Activated B cell treated with CpG ODN at 0.5 μM for 24 hours (primary cell): ENCODE measurements at regions of chr9 and their contacts with region 1.

Region 1: GRCh38 chr9:71716138-71716909 is 52.0 kb downstream of the CEMIP2 start:
- DNase-seq: no peak
- ATAC-seq: no peak
- H3K4me3 Mint-ChIP-seq: no peak overlapping the region
- H3K27ac Mint-ChIP-seq: no peak overlapping the region
- H3K4me1 Mint-ChIP-seq: no peaks in the 10 kb centered on the region
- H3K27me3 Mint-ChIP-seq: no peaks in the 10 kb centered on the region
- CTCF ChIP-seq: peak; percentile 91

Region 2: DNA sequence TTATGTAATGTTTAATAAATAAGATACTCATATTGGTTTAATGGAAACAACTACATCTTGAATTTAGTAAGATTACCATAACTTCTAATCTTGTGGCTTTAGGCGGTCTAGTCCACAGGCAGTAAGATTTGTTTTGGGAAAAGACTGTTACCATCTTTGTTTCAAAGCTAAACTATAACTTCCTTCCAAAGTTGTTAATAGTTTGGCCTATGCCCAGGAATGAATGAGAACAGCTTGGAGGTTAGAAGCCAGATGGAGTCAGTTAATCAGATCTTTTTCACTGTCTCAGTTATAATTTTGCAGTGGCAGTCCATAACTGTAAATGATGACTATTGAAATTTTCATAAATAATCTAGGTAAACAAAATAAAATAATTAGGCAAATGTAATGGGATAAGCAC is 1060.0 kb before region 1 on chr9:
- CTCF ChIA-PET with region 1: no interaction called
- POLR2A ChIA-PET with region 1: no interaction called
- intact Hi-C with region 1: no loop called
- DNase-seq: no peak
- ATAC-seq: no peak
- H3K4me3 Mint-ChIP-seq: no peak overlapping the region
- H3K27ac Mint-ChIP-seq: no peak overlapping the region
- H3K4me1 Mint-ChIP-seq: no peaks in the 10 kb centered on the region
- H3K27me3 Mint-ChIP-seq: peaks cover 4% of the 10 kb centered on the region
- CTCF ChIP-seq: no peak

Region 3: DNA sequence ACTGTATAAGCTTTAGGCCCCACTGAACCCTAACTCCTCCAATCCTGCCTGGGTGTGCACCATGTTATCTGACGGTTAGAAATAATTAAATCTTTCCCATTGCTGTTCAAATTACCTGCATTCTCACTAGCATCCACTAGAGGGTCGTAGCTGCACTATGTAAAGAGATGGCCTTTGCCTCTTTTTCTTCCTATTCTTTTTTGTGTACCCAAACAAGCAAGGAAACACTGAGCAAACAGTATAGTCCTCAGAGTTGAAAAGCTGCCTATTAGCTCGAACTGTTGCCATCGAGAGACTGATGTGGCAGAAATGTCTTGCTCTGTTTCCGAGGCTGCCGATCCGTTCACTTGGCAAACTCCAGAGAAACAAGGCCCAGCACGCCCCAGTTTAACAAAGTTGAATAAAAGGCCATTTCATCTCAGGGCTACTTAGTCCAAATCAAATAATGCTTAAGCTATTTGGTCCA is 431.1 kb before region 1 on chr9:
- CTCF ChIA-PET with region 1: no interaction called
- POLR2A ChIA-PET with region 1: no interaction called
- intact Hi-C with region 1: loop called (anchors 10 kb)
- DNase-seq: no peak
- ATAC-seq: peak; percentile 61
- H3K4me3 Mint-ChIP-seq: no peak overlapping the region
- H3K27ac Mint-ChIP-seq: no peak overlapping the region
- H3K4me1 Mint-ChIP-seq: no peaks in the 10 kb centered on the region
- H3K27me3 Mint-ChIP-seq: peaks cover 2% of the 10 kb centered on the region
- CTCF ChIP-seq: no peak

Region 4: DNA sequence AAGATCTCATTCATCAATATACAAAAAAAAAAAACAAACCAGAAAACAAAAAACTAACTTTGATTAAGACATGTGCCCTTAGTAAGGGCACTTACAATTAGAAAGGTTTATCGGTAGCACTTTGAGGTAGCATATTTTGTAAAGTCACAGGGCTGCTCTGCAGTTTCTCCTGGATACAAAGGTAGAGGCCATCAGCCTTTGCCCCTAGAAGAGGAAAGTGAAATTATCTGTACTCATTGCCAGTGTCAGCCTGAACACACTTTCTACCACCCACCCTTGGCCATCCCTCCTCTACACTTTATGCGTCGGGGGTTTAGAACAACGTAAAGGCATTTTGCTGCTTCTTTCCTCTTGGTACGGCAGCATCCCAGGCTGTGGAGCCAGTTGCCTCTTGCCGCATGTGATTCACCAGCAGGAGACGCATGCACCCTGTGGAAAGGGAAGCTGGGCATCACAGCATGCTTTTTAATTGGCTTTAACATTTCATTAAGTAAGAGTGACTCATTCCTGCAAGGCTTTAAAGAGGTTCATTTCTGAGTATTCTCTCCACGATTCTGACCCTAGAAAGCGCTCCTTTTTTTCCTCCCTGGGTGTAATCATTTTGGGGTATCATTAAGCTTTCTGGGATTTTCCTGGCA is 32.6 kb before region 1 on chr9:
- CTCF ChIA-PET with region 1: interaction called, 4 read pairs
- POLR2A ChIA-PET with region 1: interaction called, 3 read pairs
- intact Hi-C with region 1: loop called (anchors 5 kb)
- DNase-seq: no peak
- ATAC-seq: no peak
- H3K4me3 Mint-ChIP-seq: no peak overlapping the region
- H3K27ac Mint-ChIP-seq: peak overlapping the region; percentile 27
- H3K4me1 Mint-ChIP-seq: peaks cover 74% of the 10 kb centered on the region
- H3K27me3 Mint-ChIP-seq: no peaks in the 10 kb centered on the region
- CTCF ChIP-seq: no peak

Region 5: DNA sequence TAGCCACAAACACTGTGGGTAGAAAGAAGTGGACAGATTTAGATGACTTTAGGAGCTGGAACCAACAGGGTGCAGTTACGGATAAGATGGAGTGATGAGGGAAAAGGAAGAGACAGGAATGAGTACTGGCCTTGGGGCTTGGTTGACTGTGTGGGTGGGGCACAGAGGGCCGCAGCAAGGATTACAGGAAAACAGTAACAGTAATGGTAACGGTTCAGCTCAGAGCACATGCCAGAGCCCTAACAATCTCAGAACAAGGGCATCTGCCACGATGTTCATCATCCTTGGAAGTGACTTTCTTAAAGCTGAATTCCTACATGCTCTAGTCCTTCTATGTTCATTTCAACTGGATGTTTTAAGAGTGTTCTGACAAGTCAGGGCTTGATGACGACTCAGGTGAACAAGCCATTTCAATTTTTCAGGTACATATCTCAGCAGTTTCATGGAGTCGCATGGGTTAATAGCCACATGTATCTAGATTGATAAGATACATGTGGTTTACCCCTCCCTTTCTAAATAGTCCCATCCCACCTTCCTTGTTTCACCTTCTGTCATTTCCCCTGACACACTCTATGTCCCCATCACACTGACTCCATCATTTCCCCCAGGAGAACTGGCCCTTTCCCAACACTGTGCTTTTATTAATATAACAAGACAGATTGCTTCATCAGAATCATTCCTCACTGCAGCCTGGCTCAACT is 13.0 kb before region 1 on chr9:
- CTCF ChIA-PET with region 1: no interaction called
- POLR2A ChIA-PET with region 1: no interaction called
- intact Hi-C with region 1: loop called (anchors 2 kb)
- DNase-seq: no peak
- ATAC-seq: no peak
- H3K4me3 Mint-ChIP-seq: no peak overlapping the region
- H3K27ac Mint-ChIP-seq: no peak overlapping the region
- H3K4me1 Mint-ChIP-seq: no peaks in the 10 kb centered on the region
- H3K27me3 Mint-ChIP-seq: no peaks in the 10 kb centered on the region
- CTCF ChIP-seq: no peak

Region 6: GRCh38 chr9:71783120-71783530 is 66.8 kb after region 1 on chr9:
- CTCF ChIA-PET with region 1: no interaction called
- POLR2A ChIA-PET with region 1: interaction called, 11 read pairs
- intact Hi-C with region 1: no loop called
- DNase-seq: peak; percentile 37
- ATAC-seq: peak; percentile 83
- H3K4me3 Mint-ChIP-seq: peak overlapping the region; percentile 68
- H3K27ac Mint-ChIP-seq: peak overlapping the region; percentile 92
- H3K4me1 Mint-ChIP-seq: peaks cover 41% of the 10 kb centered on the region
- H3K27me3 Mint-ChIP-seq: no peaks in the 10 kb centered on the region
- CTCF ChIP-seq: no peak